Colonic mucosa (tissue), 4 donors: ENCODE measurements at regions of chr5 and their contacts with region 1.

Region 1: DNA sequence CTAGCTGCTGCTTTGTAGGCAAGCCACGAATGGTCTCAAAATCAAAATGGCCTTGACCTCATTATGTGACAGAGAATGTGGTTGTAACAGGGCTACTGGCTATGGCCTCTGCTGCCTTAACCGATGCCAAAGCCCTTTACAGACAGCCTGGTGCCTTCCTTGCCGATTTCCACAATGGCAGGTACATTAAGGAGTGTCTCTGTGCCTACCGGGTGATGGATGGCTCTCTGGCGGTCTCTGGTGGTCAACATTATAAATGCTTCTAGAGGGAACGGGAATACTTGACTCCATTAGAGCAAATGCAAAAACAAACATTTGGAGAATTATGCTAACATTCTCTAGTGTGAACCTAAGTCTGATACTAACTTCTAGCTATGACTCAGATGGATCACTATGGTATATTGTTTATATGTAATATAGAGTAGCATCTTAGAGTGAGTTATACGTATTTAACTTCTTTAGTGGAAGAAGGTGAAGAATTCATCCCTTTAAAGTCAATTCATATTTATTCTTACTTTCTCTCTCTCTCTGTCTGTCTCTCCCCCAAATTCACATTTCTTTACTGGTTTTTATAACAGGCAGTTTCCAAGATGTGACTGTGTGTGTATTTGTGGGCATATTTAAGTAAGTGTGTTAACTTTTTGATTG is 52.5 kb downstream of the RPS23 start:
- DNase-seq: peak; percentile 73
- H3K4me3 ChIP-seq: no peak overlapping the region
- H3K27ac ChIP-seq: no peak overlapping the region
- H3K4me1 ChIP-seq: no peaks in the 10 kb centered on the region
- H3K27me3 ChIP-seq: no peaks in the 10 kb centered on the region
- CTCF ChIP-seq: peak; percentile 79

Region 2: GRCh38 chr5:81420039-81420667 is 805.5 kb before region 1 on chr5:
- intact Hi-C with region 1: loop called (anchors 5 kb)
- DNase-seq: no peak
- H3K4me3 ChIP-seq: no peak overlapping the region
- H3K27ac ChIP-seq: no peak overlapping the region
- H3K4me1 ChIP-seq: no peaks in the 10 kb centered on the region
- H3K27me3 ChIP-seq: no peaks in the 10 kb centered on the region
- CTCF ChIP-seq: no peak

Region 3: GRCh38 chr5:81513982-81514381 is 711.7 kb before region 1 on chr5:
- intact Hi-C with region 1: loop called (anchors 5 kb)
- DNase-seq: no peak
- H3K4me3 ChIP-seq: no peak overlapping the region
- H3K27ac ChIP-seq: no peak overlapping the region
- H3K4me1 ChIP-seq: no peaks in the 10 kb centered on the region
- H3K27me3 ChIP-seq: no peaks in the 10 kb centered on the region
- CTCF ChIP-seq: no peak

Region 4: GRCh38 chr5:81834021-81834660 is 391.5 kb before region 1 on chr5:
- intact Hi-C with region 1: no loop called
- DNase-seq: no peak
- H3K4me3 ChIP-seq: no peak overlapping the region
- H3K27ac ChIP-seq: no peak overlapping the region
- H3K4me1 ChIP-seq: no peaks in the 10 kb centered on the region
- H3K27me3 ChIP-seq: no peaks in the 10 kb centered on the region
- CTCF ChIP-seq: no peak

Region 5: DNA sequence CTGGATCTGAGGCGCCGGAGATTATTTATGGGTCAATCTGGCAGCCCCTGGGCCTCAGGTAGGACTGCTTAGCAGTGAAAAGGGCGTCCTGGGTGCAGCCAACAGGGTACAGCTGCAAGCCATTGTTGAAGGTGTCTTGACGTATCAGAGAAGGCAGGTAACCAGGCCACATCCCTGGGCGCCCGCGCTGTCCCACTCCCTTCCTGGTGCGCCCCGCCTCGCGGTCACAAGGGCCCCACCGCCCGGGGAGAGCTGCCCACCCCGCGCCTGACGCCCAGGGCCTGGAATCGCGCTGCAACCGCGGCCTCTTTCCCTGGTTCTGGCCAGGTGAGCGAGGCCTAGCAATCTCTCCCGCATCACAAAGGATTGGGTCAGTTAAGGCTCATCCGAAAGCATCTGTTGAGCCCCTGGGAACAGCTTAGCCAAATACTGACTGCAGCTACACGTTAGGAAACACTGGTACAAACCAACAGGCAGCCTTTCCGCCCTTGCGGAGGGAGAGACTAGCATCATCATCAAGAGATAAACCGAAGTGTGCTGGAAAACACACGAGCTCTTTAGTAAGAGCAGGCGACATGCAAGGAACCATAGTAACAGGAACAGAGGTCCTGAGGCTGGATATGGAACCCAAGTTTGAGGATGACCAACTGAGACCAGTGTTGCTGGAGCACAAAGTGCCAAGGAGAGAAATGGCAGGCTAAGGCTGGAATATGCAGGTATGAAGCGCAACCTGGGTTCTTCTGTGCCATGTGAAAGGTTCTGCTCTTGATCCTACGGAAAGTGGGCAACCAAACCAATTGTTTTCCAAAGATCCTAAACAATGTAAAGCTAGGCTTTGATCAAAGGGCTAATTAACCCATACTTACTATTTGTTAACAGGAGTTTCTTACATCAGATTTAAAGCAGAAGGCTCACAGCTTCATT is 49.0 kb after region 1 on chr5:
- intact Hi-C with region 1: no loop called
- DNase-seq: no peak
- H3K4me3 ChIP-seq: no peak overlapping the region
- H3K27ac ChIP-seq: no peak overlapping the region
- H3K4me1 ChIP-seq: peaks cover 5% of the 10 kb centered on the region
- H3K27me3 ChIP-seq: no peaks in the 10 kb centered on the region
- CTCF ChIP-seq: no peak

Region 6: DNA sequence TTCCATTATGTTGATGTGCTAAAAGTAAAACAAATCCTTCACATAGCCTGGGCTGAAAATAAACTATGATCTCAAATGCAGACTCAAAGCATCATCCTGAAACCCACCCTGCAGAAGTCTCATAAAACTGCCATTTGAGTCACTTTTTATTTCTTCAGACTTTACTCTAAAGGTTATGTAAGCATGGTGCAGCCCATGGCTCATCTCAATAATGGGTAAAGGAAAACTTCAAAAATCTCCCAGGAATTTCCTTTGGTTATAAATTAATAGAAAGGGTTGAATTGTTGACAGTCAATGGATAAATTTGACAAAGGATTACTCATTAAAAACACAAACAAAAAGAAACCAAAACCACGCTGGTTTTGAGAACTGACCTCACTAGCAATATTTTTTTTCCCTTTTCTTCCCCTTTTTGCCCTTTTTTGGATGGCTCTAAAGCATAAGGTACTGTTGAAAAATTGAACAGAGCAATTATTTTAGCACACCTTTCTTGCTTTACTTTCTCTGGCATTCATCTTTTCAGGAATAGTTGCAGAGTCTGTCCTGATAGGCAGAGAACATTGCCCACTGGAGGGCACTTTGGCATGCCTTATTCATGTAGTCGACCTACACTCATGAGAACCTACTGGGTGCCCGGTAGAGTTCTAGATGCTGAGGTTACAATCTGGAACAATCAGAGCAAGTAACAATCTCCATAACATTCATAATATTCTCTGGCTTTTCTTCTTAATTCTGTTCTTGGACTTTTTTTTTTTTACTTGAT is 660.2 kb after region 1 on chr5:
- intact Hi-C with region 1: no loop called
- DNase-seq: no peak
- H3K4me3 ChIP-seq: no peak overlapping the region
- H3K27ac ChIP-seq: no peak overlapping the region
- H3K4me1 ChIP-seq: no peaks in the 10 kb centered on the region
- H3K27me3 ChIP-seq: no peaks in the 10 kb centered on the region
- CTCF ChIP-seq: no peak